CD4-positive, alpha-beta memory T cell (primary cell): ENCODE measurements at regions of chrX and their contacts with region 1.

Region 1: DNA sequence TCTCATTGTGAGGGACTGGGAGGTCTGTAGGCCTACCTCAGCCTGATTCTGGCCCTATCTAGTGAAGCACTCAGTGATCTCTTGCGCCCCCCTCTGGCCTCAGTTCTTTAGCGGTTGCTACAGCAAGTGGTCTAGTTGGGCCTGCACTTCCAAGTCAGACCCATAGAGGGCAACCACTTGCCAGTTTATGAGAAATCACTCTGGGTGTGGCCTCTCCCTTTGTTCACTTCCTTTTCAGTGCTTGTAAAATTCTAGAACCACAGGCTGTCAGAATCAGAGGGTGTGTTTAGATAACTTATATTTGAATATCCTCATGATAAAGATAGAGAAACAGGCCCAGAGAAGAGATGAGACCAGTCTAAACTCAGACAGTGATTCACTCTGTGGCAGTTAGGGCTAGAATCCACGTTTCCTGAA is 60.9 kb upstream of the LAS1L start:
- DNase-seq: peak; percentile 90 to 93 (median 91)
- H3K4me3 ChIP-seq: peak overlapping the region in 1 of 2 donors; percentile 5
- H3K4me3 Mint-ChIP-seq: peak overlapping the region; percentile 37 to 88 (median 64)
- H3K27ac ChIP-seq: peak overlapping the region; percentile 62
- H3K27ac Mint-ChIP-seq: peak overlapping the region; percentile 89 to 98 (median 95)
- H3K4me1 ChIP-seq: peaks cover 52% of the 10 kb centered on the region
- H3K4me1 Mint-ChIP-seq: peaks cover 30 to 54% (median 46%) of the 10 kb centered on the region in 4 donors
- H3K27me3 ChIP-seq: no peaks in the 10 kb centered on the region
- H3K27me3 Mint-ChIP-seq: no peaks in the 10 kb centered on the region

Region 2: DNA sequence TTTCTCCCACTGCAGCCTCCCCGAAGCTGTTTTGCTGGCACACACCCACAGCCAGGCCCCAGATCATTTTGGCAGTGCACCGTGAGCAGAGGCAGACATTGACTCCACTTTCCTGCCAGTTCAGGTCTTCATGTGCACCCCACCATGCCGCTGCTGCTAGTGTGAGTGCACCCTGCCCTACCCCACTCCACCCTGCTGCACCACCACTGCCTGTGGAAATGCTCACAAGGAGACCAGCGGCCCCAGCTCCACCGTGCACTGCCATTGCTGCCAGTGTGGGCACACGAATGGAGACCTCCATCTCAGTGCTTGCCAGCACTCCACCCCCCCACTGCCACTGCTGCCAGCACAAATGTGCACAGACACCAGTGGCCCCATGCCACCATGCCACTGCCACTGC is 341.7 kb before region 1 on chrX:
- CTCF ChIA-PET with region 1: no interaction called
- POLR2A ChIA-PET with region 1: no interaction called
- intact Hi-C with region 1: no loop called
- DNase-seq: no peak
- H3K4me3 ChIP-seq: no peak overlapping the region
- H3K4me3 Mint-ChIP-seq: no peak overlapping the region
- H3K27ac ChIP-seq: no peak overlapping the region
- H3K27ac Mint-ChIP-seq: no peak overlapping the region
- H3K4me1 ChIP-seq: no peaks in the 10 kb centered on the region
- H3K4me1 Mint-ChIP-seq: peaks cover 0 to 7% (median 0%) of the 10 kb centered on the region in 4 donors
- H3K27me3 ChIP-seq: no peaks in the 10 kb centered on the region
- H3K27me3 Mint-ChIP-seq: no peaks in the 10 kb centered on the region

Region 3: GRCh38 chrX:65677954-65678469 is 82.5 kb after region 1 on chrX:
- CTCF ChIA-PET with region 1: interaction called, 8 read pairs
- POLR2A ChIA-PET with region 1: interaction called, 11 read pairs
- intact Hi-C with region 1: loop called (anchors 1 kb)
- DNase-seq: no peak
- H3K4me3 ChIP-seq: no peak overlapping the region
- H3K4me3 Mint-ChIP-seq: peak overlapping the region in 7 of 8 donors; percentile 57 to 83 (median 70)
- H3K27ac ChIP-seq: no peak overlapping the region
- H3K27ac Mint-ChIP-seq: peak overlapping the region; percentile 2 to 92 (median 68)
- H3K4me1 ChIP-seq: peaks cover 100% of the 10 kb centered on the region
- H3K4me1 Mint-ChIP-seq: peaks cover 65 to 97% (median 78%) of the 10 kb centered on the region in 4 donors
- H3K27me3 ChIP-seq: no peaks in the 10 kb centered on the region
- H3K27me3 Mint-ChIP-seq: no peaks in the 10 kb centered on the region

Region 4: GRCh38 chrX:65706041-65706828 is 110.8 kb after region 1 on chrX:
- CTCF ChIA-PET with region 1: interaction called, 14 read pairs
- POLR2A ChIA-PET with region 1: interaction called, 11 read pairs
- intact Hi-C with region 1: loop called (anchors 1 kb)
- DNase-seq: peak in 1 of 5 donors; percentile 75
- H3K4me3 ChIP-seq: peak overlapping the region in 1 of 2 donors; percentile 15
- H3K4me3 Mint-ChIP-seq: peak overlapping the region in 7 of 8 donors; percentile 32 to 82 (median 63)
- H3K27ac ChIP-seq: peak overlapping the region; percentile 61
- H3K27ac Mint-ChIP-seq: peak overlapping the region; percentile 85 to 97 (median 92)
- H3K4me1 ChIP-seq: peaks cover 71% of the 10 kb centered on the region
- H3K4me1 Mint-ChIP-seq: peaks cover 51 to 82% (median 68%) of the 10 kb centered on the region in 4 donors
- H3K27me3 ChIP-seq: no peaks in the 10 kb centered on the region
- H3K27me3 Mint-ChIP-seq: no peaks in the 10 kb centered on the region

Region 5: DNA sequence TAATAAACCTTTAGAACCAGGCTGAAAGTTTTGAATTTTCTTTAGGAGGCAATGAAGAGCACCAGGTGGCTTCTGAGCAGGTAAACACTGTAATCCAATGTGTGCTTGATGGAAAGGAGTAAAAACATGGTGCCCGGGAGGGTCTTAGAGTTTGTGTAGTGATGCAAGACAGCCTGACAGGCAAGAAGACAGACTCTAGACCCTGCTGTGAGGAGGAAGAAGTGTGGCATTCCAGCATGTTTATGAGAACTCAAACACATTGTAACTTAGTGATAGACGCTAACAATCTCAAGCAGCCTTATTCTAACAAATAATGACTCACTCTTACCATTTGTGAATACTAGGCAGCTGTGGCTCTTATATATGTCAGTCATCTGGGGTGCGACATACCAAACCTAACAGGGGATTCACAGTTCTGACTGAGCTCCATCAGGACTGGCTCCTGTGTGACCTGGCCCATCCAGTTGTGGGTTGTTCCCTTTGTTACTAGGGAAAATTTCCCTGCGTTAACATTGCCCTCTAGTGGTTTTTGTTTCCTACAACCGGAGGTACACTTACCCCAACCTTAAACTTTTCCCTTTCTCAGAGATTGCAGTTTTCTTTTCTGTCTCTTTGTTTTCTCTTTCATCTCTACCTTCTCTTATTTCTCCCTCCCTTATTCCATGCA is 390.6 kb after region 1 on chrX:
- CTCF ChIA-PET with region 1: interaction called, 10 read pairs
- POLR2A ChIA-PET with region 1: interaction called, 3 read pairs
- intact Hi-C with region 1: loop called (anchors 1 kb)
- DNase-seq: peak; percentile 54 to 82 (median 58)
- H3K4me3 ChIP-seq: no peak overlapping the region
- H3K4me3 Mint-ChIP-seq: peak overlapping the region in 2 of 8 donors; percentile 16 to 21
- H3K27ac ChIP-seq: no peak overlapping the region
- H3K27ac Mint-ChIP-seq: peak overlapping the region in 6 of 7 donors; percentile 34 to 88 (median 58)
- H3K4me1 ChIP-seq: peaks cover 26% of the 10 kb centered on the region
- H3K4me1 Mint-ChIP-seq: peaks cover 15 to 28% (median 24%) of the 10 kb centered on the region in 4 donors
- H3K27me3 ChIP-seq: no peaks in the 10 kb centered on the region
- H3K27me3 Mint-ChIP-seq: no peaks in the 10 kb centered on the region

Region 6: GRCh38 chrX:66728818-66729271 is 1133.4 kb after region 1 on chrX:
- CTCF ChIA-PET with region 1: no interaction called
- POLR2A ChIA-PET with region 1: no interaction called
- intact Hi-C with region 1: loop called (anchors 5 kb)
- DNase-seq: peak; percentile 60 to 66 (median 65)
- H3K4me3 ChIP-seq: peak overlapping the region; percentile 47 to 55
- H3K4me3 Mint-ChIP-seq: peak overlapping the region; percentile 90 to 95 (median 92)
- H3K27ac ChIP-seq: peak overlapping the region; percentile 43
- H3K27ac Mint-ChIP-seq: peak overlapping the region; percentile 89 to 99 (median 97)
- H3K4me1 ChIP-seq: no peaks in the 10 kb centered on the region
- H3K4me1 Mint-ChIP-seq: peaks cover 0 to 6% (median 2%) of the 10 kb centered on the region in 4 donors
- H3K27me3 ChIP-seq: no peaks in the 10 kb centered on the region
- H3K27me3 Mint-ChIP-seq: no peaks in the 10 kb centered on the region